ENCODE measurements at regions of chr1 and their contacts with region 1.

Region 1: DNA sequence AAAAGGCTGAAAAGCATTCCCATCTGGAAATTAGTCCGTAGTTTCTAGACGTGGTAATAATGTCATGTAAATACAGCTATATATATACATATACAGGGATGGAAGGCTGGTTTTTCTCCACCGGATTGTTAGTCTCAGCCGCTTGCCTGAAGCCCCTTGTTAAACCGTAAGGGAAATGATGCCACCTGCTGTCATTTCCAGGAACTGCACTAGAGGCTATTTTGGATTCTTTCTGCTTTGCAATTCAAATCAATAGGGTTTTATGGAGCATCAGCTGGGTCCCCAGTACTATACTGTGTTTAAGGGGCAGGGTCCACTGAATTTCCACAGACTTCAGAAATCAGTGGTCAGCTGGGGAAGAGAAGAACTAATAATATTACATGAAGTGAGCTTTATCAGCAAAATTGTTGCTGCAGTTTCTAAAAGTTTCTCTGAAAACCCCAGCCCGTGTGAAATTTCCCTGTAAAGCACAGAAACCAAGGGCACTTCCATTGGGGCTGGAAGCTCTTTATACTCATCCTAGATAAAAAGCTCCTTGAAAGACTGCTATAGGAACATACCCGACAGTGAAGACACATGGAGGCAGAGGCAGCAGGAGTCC is 33.8 kb upstream of the MPZL1 start:
- DNase-seq: peak; percentile 83
- H3K4me3 ChIP-seq: no peak overlapping the region
- H3K27ac ChIP-seq: no peak overlapping the region
- H3K4me1 ChIP-seq: peaks cover 0 to 47% (median 43%) of the 10 kb centered on the region in 4 donors
- H3K27me3 ChIP-seq: no peaks in the 10 kb centered on the region
- CTCF ChIP-seq: peak; percentile 62 to 95 (median 92)
- EP300 ChIP-seq: no peak
- POLR2A ChIP-seq: no peak

Region 2: DNA sequence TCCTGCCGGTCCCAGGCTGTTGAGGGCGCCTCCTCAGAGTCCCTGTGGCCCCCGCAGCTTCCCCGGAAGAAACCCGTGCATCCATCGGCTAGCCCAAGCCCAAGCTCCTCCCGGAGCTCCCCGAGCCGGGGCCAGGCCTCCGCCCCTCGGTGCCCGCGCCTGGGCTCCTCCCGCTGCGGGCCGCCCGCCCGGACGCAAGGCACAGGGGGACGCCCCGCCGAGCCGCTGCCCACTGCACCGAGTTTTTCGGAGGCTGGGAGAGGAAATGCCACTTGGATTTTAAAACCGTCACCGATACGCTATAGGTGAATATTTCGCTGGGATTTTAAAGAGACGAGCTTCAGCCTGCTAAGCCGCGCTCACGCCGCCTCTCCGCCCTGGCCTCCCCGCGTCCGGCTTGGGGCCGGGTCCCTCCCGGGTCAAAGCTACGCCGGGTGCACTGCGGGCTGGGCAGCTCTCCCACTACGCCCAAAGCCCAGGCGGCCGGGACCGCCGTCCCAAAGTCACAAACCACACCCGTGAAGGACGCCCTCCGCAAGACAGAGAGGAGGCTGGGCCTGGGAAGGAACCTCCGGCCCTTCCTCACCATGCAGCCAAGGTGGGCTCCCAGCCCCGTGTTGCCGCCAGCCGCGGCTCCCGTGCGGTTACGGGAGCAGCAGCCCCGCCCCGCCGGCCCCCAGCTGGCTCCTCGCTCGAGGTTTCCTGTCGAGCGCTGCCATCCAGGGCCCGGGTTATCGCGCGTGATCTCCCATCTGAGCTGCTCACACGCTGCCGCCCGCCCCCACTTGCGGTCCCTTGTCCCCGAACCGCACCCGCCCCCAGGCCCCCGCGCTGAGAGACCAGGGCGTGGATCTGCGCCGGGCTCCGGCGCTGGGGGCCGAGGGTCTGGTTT is 232.9 kb before region 1 on chr1:
- intact Hi-C with region 1: loop called (anchors 10 kb)
- DNase-seq: peak; percentile 82
- H3K4me3 ChIP-seq: peak overlapping the region; percentile 53 to 81 (median 72)
- H3K27ac ChIP-seq: peak overlapping the region; percentile 76 to 87 (median 80)
- H3K4me1 ChIP-seq: peaks cover 0 to 8% (median 5%) of the 10 kb centered on the region in 4 donors
- H3K27me3 ChIP-seq: no peaks in the 10 kb centered on the region
- CTCF ChIP-seq: no peak
- EP300 ChIP-seq: no peak
- POLR2A ChIP-seq: peak in 1 of 2 donors; percentile 19

Region 3: GRCh38 chr1:167553136-167554027 is 134.6 kb before region 1 on chr1 and contains the start of gene CREG1:
- intact Hi-C with region 1: loop called (anchors 5 kb)
- DNase-seq: peak; percentile 97
- H3K4me3 ChIP-seq: peak within 1 kb of the TSS; percentile 59 to 97 (median 84)
- H3K27ac ChIP-seq: peak within 1 kb of the TSS; percentile 78 to 87 (median 86)
- H3K4me1 ChIP-seq: peaks cover 0 to 41% (median 31%) of the 10 kb centered on the region in 4 donors
- H3K27me3 ChIP-seq: no peaks in the 10 kb centered on the region
- CTCF ChIP-seq: no peak
- EP300 ChIP-seq: no peak
- POLR2A ChIP-seq: peak; percentile 28 to 51
- total RNA-seq, gene CREG1: 139 to 180 (median 168) TPM

Region 4: DNA sequence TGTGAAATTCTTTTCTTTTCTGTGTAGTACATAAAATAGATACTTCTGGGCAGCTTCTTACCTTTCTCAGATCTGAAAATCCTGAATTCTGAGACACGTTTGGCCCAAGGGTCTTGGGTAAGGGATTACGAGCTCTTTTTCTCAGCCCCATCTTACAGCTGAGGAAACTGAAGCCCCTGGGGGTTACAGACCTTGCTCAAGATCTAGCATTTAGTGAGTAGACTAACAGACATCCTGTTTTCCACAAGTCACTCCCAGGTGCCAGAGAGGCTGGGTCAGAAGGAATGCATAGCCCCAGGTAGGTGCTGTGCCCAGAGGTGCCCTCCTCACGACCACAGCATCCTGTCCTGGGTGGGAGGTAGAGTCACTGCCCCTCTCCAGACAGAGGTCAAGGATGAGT is 121.3 kb before region 1 on chr1:
- intact Hi-C with region 1: no loop called
- DNase-seq: no peak
- H3K4me3 ChIP-seq: no peak overlapping the region
- H3K27ac ChIP-seq: no peak overlapping the region
- H3K4me1 ChIP-seq: no peaks in the 10 kb centered on the region
- H3K27me3 ChIP-seq: no peaks in the 10 kb centered on the region
- CTCF ChIP-seq: no peak
- EP300 ChIP-seq: no peak
- POLR2A ChIP-seq: no peak

Region 5: GRCh38 chr1:167599957-167600581 is 88.0 kb before region 1 on chr1:
- intact Hi-C with region 1: loop called (anchors 1 kb)
- DNase-seq: no peak
- H3K4me3 ChIP-seq: no peak overlapping the region
- H3K27ac ChIP-seq: no peak overlapping the region
- H3K4me1 ChIP-seq: peaks cover 0 to 18% (median 14%) of the 10 kb centered on the region in 4 donors
- H3K27me3 ChIP-seq: no peaks in the 10 kb centered on the region
- CTCF ChIP-seq: peak; percentile 24 to 45 (median 40)
- EP300 ChIP-seq: no peak
- POLR2A ChIP-seq: no peak

Region 6: DNA sequence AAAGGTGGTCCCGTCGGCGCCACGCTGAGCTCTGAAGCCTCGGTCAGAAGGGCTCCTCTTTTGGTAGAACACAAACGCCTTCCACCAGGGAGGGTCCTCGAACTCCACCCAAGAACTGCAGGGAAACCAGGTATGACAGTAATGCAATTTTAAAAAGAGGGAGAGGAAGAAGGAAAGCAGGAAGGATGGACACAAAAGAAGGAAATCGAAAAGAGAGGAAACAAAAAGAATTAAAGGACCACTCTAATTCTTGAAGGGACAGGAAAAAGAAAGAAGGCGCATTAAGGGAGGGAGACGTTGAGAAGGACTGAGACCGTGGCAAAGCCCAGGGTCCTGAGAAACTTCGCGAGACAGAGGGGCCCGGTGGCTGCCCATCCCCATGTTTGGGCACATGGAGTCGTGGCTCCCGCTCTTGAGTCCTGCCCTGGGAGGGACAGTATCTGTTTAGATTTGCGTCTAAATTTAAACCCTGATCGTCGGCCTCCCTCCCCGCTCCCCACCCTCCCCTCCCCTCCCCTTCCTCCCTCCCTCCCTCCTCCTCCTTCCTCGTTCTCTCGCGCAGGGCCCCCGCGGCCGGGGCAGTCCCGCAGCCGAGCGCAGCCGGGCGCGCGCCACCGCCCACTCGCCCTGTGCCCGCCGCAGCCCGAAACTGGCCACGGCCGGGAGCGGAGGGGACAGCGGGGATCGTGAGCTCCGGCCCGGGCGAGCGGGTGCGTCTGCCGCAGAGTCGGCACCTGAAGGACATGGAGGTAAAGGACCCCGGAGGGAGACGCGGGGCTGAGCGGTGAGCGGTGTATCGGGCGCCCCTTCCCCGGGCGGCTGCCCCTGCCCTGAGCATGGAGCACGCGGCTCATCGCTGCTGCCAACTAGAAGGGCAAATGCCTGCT is 58.1 kb before region 1 on chr1 and contains the start of gene RCSD1:
- intact Hi-C with region 1: loop called (anchors 2 kb)
- DNase-seq: no peak
- H3K4me3 ChIP-seq: peak within 1 kb of the TSS; percentile 45 to 73 (median 56)
- H3K27ac ChIP-seq: peak within 1 kb of the TSS; percentile 65 to 81 (median 70)
- H3K4me1 ChIP-seq: peaks cover 0 to 24% (median 9%) of the 10 kb centered on the region in 4 donors
- H3K27me3 ChIP-seq: no peaks in the 10 kb centered on the region
- CTCF ChIP-seq: no peak
- EP300 ChIP-seq: no peak
- POLR2A ChIP-seq: no peak
- total RNA-seq, gene RCSD1: 8.0 to 19.6 (median 9.6) TPM

Region 7: DNA sequence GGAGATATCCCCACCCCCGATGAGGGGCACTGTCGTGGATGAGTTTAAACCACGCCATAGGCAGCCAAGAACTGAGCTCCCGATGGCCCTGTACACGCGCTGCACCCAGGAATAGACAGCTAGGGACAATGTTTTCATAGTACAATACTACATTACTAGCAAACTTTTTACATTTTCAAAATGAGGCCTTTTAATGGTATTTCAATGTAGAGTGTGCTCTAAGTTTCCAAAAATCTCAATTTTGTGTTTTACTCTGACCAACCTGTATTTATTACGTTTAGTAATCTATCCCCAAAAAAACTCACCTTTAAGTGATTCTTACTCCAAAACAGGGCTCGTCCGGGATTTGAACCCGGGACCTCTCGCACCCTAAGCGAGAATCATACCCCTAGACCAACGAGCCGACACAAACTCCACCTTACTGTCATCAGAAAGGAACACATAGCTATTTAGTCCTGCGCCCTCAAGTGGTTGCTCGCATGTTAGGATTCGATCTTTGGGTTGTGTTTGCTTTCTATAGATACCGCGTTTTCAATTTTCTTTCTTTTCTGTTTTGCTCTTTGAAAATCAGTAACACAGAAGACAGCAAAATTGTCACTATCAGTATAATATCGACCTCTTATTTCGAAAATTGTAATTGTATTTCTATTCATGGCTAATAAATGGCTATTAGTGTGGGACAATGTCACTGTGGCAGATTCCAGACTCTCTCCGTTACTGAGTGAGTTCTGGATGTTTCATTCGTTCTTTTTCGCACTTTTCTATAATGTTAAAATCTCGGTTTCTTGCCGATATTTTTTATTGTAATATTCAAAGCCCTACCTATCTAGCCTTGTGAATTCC is 27.4 kb after region 1 on chr1:
- intact Hi-C with region 1: loop called (anchors 2 kb)
- DNase-seq: peak; percentile 92
- H3K4me3 ChIP-seq: peak overlapping the region; percentile 57 to 73 (median 67)
- H3K27ac ChIP-seq: peak overlapping the region; percentile 86 to 92 (median 88)
- H3K4me1 ChIP-seq: peaks cover 0 to 20% (median 3%) of the 10 kb centered on the region in 4 donors
- H3K27me3 ChIP-seq: no peaks in the 10 kb centered on the region
- CTCF ChIP-seq: peak; percentile 76 to 91 (median 89)
- EP300 ChIP-seq: no peak
- POLR2A ChIP-seq: no peak

Region 8: GRCh38 chr1:167746988-167747655 is 59.1 kb after region 1 on chr1:
- intact Hi-C with region 1: no loop called
- DNase-seq: no peak
- H3K4me3 ChIP-seq: no peak overlapping the region
- H3K27ac ChIP-seq: no peak overlapping the region
- H3K4me1 ChIP-seq: peaks cover 0 to 45% (median 15%) of the 10 kb centered on the region in 4 donors
- H3K27me3 ChIP-seq: no peaks in the 10 kb centered on the region
- CTCF ChIP-seq: no peak
- EP300 ChIP-seq: no peak
- POLR2A ChIP-seq: no peak